ENCODE measurements at regions of chr4 and their contacts with region 1.

Region 1: DNA sequence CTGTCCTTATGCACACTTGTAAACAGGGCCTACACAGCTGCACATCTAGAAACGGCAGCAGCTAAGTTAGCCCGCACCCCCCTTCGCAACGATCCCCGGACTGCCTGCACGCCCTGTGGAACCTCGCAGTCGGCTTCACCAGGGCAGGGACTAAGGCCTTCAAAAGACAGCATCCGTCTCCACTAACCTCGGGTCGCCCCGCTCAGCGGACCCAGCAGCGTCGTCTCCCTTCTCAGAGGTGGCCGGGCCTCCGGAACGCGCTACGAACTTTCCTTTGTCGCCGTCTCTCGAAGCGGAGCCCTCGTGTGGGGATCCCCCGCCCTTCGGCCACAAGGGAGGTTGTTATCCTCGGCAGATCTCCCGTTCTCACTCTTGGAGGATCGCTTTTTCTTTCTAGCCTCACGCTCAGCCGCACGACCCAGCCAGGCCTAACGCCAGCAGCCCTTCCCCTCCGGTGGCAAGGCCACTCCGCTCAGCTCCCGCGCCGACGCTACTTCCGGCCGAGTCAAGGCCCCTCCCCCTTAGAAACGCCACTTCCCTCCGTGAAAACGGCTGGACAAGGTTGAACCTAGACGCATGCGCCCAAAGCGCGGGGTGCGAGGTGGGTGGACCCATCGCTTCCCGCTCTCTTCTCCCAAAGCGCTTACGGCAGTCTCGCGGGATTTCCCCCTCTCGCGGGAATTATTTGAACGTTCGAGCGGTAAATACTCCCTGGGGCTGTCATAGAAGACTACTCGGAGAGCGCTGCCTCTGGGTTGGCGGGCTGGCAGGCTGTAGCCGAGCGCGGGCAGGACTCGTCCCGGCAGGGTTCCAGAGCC is at the starts of genes DCAF16 and NCAPG:
- DNase-seq: peak; percentile 94 to 98
- H3K4me3 ChIP-seq: peak within 1 kb of the TSS; percentile 89
- H3K27ac ChIP-seq: peak within 1 kb of the TSS; percentile 74
- H3K4me1 ChIP-seq: peaks cover 35% of the 10 kb centered on the region
- H3K27me3 ChIP-seq: no peaks in the 10 kb centered on the region
- CTCF ChIP-seq: no peak
- total RNA-seq, gene DCAF16: 53.2 and 54.2 TPM in 2 replicates
- total RNA-seq, gene NCAPG: 36.8 and 53.7 TPM in 2 replicates

Region 2: DNA sequence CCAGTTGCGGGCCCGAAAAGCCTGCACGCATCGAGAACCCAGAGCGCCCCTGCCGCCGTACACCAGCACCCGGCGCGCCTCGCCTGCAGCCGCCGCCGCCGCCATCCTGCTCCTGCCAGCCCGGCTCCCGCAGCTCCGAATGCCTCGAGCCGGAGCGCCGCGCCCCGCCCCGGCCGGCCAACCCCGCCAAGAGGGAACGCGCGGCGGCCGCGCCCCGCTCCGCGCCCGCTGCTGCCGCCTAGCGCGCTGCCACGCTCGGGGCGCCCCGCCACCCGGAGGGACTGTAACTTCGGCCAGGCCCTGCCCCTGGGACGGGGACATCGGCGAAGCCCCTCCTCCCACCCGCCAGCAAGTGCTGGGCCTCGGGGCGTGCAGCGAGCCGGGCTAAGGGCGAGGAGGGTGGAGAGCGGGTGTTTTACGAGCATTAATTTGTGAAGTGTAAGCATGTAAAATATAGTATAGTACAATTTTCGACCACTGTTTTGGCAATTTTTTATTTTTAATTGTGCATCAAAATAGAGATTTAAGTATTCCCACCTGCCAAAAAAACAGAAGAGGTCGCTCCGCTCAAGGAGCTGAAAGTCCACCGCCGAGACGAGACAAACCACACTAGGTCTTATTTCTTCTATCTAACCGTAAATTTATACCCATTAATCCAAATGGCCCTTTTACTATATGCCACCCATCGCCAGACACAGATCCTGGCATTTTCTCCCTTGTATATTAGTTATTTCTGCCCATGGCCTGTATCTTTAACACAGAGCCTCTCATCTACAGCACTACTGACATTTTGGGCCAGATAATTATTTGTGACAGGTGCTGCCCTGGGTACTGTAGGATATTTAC is 298.3 kb before region 1 on chr4 and contains the start of gene QDPR:
- CTCF ChIA-PET with region 1: no interaction called
- POLR2A ChIA-PET with region 1: no interaction called
- intact Hi-C with region 1: loop called (anchors 5 kb)
- DNase-seq: peak; percentile 57 to 89
- H3K4me3 ChIP-seq: peak within 1 kb of the TSS; percentile 81
- H3K27ac ChIP-seq: no peak within 1 kb of the TSS
- H3K4me1 ChIP-seq: peaks cover 11% of the 10 kb centered on the region; the same call in 1 of the 2 replicates
- H3K27me3 ChIP-seq: peaks cover 15% of the 10 kb centered on the region; the same call in 1 of the 2 replicates
- CTCF ChIP-seq: peak; percentile 37; the same call in 1 of the 2 replicates
- total RNA-seq, gene QDPR: 14.0 and 27.8 TPM in 2 replicates

Region 3: DNA sequence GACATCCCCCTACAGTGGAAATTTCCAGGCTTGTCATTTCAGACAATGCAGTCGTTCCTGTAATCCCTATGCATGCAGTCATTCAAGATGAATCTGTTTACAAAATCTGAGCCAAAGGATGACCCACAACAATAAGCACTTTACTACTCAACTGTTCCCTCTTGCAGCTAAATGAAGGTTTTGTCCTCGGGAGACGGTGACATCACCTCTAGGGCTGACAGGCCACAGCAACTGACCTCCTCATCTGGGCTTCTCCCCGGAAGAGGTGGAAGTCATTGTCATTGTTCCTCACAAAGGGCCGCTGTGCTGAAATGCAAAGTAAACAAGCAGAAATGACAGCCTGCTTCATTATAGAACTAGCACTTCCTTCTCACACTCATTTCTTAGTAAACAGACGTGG is 266.3 kb before region 1 on chr4:
- CTCF ChIA-PET with region 1: no interaction called
- POLR2A ChIA-PET with region 1: no interaction called
- intact Hi-C with region 1: loop called (anchors 1 kb)
- DNase-seq: peak in 1 of 2 experiments; percentile 46
- H3K4me3 ChIP-seq: no peak overlapping the region
- H3K27ac ChIP-seq: no peak overlapping the region
- H3K4me1 ChIP-seq: 0 out of 2 replicates have a peak, but pooled peaks cover 3% of the 10 kb centered on the region
- H3K27me3 ChIP-seq: no peaks in the 10 kb centered on the region
- CTCF ChIP-seq: no peak

Region 4: GRCh38 chr4:17576932-17577665 is 233.4 kb before region 1 on chr4 and contains the start of gene LAP3:
- CTCF ChIA-PET with region 1: interaction called, 5 read pairs
- POLR2A ChIA-PET with region 1: no interaction called
- intact Hi-C with region 1: loop called (anchors 10 kb)
- DNase-seq: peak; percentile 86 to 97
- H3K4me3 ChIP-seq: peak within 1 kb of the TSS; percentile 87
- H3K27ac ChIP-seq: peak within 1 kb of the TSS; percentile 37
- H3K4me1 ChIP-seq: 0 out of 2 replicates have a peak, but pooled peaks cover 3% of the 10 kb centered on the region
- H3K27me3 ChIP-seq: no peaks in the 10 kb centered on the region
- CTCF ChIP-seq: no peak
- total RNA-seq, gene LAP3: 43.9 and 45.0 TPM in 2 replicates

Region 5: GRCh38 chr4:17614416-17615299 is 195.8 kb before region 1 on chr4 and contains the start of gene MED28:
- CTCF ChIA-PET with region 1: no interaction called
- POLR2A ChIA-PET with region 1: no interaction called
- intact Hi-C with region 1: loop called (anchors 2 kb)
- DNase-seq: peak; percentile 81 to 87
- H3K4me3 ChIP-seq: peak within 1 kb of the TSS; percentile 72
- H3K27ac ChIP-seq: peak within 1 kb of the TSS; percentile 51
- H3K4me1 ChIP-seq: no peaks in the 10 kb centered on the region
- H3K27me3 ChIP-seq: no peaks in the 10 kb centered on the region
- CTCF ChIP-seq: no peak
- total RNA-seq, gene MED28: 39.0 and 43.1 TPM in 2 replicates

Region 6: DNA sequence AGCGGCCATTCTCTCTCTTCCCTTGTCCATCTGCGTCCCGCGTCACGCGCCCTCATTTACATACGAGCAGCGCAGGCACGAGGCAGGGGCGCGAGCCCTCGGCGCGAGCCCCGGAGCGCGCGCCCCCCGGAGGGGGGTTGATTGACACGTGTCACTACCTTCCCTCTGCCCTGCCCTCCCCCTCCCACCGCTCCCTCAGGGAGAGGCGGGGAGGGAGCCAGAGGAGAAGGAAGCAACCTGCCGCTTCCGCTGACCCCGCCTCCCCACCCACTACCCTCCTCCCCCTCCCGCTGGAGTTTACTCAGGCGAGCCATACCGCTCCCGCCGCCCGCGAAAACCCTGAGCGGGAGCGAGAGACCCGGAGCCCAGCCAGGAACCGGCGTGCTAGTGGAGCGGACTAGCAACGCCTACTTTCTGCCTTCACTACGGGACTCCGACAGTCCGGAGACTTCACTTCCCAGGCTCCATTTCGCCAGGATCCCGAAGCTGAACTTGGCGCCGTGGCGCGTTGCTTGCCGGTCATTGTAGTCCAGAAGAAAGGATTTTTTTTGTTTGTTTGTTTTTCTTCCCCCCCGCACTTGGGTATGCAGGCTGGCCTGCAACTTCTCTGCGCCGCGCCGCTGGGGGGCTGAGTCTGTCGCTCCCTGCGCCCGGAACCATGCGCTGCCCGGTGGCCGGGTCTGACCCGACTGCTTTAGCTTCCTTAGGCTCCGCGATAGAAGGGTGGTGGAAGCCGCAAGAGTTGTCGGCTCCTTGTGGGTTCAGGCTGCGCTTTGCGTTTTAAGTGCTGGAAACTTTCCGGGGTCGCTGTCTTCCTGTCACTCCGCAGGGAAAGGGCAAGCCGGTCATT is 211.5 kb after region 1 on chr4 and contains the start of gene LCORL:
- CTCF ChIA-PET with region 1: no interaction called
- POLR2A ChIA-PET with region 1: no interaction called
- intact Hi-C with region 1: loop called (anchors 5 kb)
- DNase-seq: peak; percentile 89 to 92
- H3K4me3 ChIP-seq: peak within 1 kb of the TSS; percentile 75
- H3K27ac ChIP-seq: peak within 1 kb of the TSS; percentile 63
- H3K4me1 ChIP-seq: peaks cover 7% of the 10 kb centered on the region
- H3K27me3 ChIP-seq: no peaks in the 10 kb centered on the region
- CTCF ChIP-seq: no peak; the same call in 1 of the 2 replicates
- total RNA-seq, gene LCORL: 13.8 and 22.9 TPM in 2 replicates